ENCODE measurements at regions of chr3 and their contacts with region 1.

Region 1: GRCh38 chr3:196867507-196868296 is at the start of gene SENP5:
- DNase-seq: peak; percentile 48 to 87
- ATAC-seq: peak; percentile 93 to 95
- H3K4me3 ChIP-seq: peak within 1 kb of the TSS; percentile 79
- H3K27ac ChIP-seq: peak within 1 kb of the TSS; percentile 78 to 99
- H3K4me1 ChIP-seq: peaks cover 10% of the 10 kb centered on the region; the same call in 2 of the 3 replicates
- CTCF ChIP-seq: 0 out of 3 replicates have a peak, but pooled peaks have one; percentile 12
- EP300 ChIP-seq: no peak
- POLR2A ChIP-seq: peak; percentile 87
- RAD21 ChIP-seq: no peak
- polyA plus RNA-seq, gene SENP5: 12.9 and 14.4 TPM in 2 replicates

Region 2: DNA sequence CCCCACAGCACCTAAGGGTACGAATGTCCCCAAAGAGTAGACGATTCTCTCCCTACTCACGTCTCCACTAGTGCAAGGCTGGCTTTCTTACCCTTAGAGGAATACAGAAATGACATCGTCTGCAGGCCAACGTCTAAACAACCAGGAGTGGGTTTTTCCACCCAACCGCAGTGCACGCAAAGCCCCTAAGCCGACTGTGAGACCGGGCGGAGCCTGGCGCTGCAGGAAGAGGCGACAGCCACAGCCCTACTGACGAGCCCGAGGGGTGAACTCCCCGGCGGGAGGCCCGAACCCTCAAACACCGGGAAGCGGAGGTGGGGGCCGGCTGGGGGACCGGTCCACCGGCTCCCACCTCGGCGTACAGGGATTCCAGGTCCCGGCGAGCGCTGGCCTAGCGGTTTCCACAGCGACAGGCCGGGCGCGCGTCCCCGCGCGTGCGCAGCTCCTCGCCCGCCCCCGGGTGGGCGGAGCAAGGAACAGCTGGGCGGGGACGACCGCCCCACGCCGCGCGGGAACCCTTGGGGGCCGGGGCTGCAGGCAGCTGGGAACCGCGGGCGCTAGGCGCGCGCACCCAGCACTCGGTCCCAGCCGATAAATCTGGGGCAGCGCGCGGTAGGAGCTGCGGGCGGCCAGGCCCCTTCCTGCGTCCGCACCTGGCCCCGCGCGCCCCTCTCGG is 155.7 kb before region 1 on chr3 and contains the starts of genes CEP19 and PIGX:
- CTCF ChIA-PET with region 1: no interaction called
- POLR2A ChIA-PET with region 1: interaction called, 10 read pairs
- DNase-seq: peak; percentile 74 to 81
- ATAC-seq: peak; percentile 89 to 93
- H3K4me3 ChIP-seq: peak within 1 kb of the TSS; percentile 93
- H3K27ac ChIP-seq: peak within 1 kb of the TSS; percentile 95 to 99
- H3K4me1 ChIP-seq: peaks cover 19% of the 10 kb centered on the region
- CTCF ChIP-seq: no peak
- EP300 ChIP-seq: no peak
- POLR2A ChIP-seq: peak; percentile 76
- RAD21 ChIP-seq: no peak
- polyA plus RNA-seq, gene CEP19: 4.2 and 5.3 TPM in 2 replicates
- polyA plus RNA-seq, gene PIGX: 36.2 and 45.2 TPM in 2 replicates

Region 3: DNA sequence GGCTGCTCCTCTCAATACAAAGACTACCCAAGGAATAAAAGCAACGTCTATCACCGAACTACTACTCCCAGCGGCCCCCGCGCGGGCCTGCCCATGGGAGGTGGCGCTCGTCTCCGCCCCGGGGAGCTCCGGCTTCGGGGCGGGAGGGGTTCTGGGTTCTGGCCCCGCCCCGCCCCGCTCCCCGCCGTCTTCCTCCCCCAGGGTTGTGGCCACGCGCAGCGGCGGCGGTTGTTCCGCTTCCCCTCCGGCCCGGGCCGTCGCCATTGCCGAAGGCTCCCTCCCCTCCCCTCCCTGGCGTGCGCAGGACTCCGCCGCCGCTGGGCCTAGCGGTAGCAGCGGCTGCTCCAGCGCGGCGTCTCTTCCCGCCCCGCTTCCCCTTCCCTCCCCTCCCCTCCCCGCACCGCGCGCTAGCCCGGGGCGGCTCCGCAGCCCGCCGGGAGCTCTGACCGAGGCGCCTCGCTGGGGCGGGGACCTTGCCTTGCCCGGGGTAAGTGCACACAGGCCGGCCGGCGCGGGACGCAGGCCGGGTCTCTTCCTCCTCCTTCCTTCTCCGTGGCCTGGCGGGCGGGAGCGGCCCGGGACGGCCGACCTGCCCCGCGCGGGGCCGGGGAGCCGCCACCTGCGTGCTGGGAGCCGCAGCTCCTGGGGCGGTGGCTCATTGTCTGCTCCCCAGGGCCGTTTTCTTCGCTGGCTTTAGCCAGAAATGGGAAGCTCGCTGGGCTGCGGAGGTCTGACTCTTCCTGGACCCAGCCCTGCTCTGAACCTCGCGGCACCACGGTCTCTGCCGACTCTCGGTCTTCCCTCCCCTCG is 127.8 kb before region 1 on chr3 and contains the start of gene PAK2:
- CTCF ChIA-PET with region 1: no interaction called
- POLR2A ChIA-PET with region 1: interaction called, 13 read pairs
- DNase-seq: peak; percentile 56 to 85
- ATAC-seq: peak; percentile 89 to 97
- H3K4me3 ChIP-seq: peak within 1 kb of the TSS; percentile 70
- H3K27ac ChIP-seq: peak within 1 kb of the TSS; percentile 94 to 95
- H3K4me1 ChIP-seq: peaks cover 7% of the 10 kb centered on the region; the same call in 1 of the 3 replicates
- CTCF ChIP-seq: no peak
- EP300 ChIP-seq: no peak
- POLR2A ChIP-seq: peak; percentile 78
- RAD21 ChIP-seq: no peak
- polyA plus RNA-seq, gene PAK2: 49.8 and 61.8 TPM in 2 replicates

Region 4: DNA sequence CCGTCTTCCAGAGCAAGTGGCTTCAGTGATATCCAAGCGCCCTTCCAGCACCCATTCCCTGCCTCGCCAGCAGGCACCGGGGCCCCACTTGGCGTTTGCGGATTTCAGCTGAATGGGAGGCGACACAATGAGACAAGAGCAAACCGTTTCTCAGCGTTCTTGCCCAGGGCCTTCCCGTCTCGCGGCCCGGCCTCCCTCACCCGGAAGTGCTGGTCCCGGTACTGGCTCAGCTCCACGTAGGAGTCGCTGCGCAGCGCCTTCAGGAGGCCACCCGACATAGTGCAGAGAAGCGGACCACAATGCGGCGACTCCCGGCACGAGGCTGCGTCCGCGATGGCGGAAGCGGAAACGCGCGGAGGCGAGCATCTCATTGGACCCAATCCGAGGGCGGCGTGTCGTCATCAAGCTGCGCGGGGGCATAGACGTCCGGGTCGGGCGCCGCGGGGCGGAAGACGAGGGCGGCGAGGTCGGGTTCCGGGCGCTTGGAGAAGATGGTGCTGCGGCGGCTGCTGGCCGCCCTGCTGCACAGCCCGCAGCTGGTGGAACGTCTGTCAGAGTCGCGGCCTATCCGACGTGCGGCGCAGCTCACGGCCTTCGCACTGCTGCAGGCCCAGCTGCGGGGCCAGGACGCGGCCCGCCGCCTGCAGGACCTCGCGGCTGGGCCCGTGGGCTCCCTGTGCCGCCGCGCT is 74.7 kb after region 1 on chr3 and contains the start of gene NCBP2:
- CTCF ChIA-PET with region 1: interaction called, 3 read pairs
- POLR2A ChIA-PET with region 1: interaction called, 10 read pairs
- DNase-seq: peak; percentile 87 to 97
- ATAC-seq: peak; percentile 96 to 97
- H3K4me3 ChIP-seq: peak within 1 kb of the TSS; percentile 89
- H3K27ac ChIP-seq: peak within 1 kb of the TSS; percentile 97 to 98
- H3K4me1 ChIP-seq: peaks cover 9% of the 10 kb centered on the region; the same call in 2 of the 3 replicates
- CTCF ChIP-seq: peak; percentile 46; the same call in 2 of the 3 replicates
- EP300 ChIP-seq: no peak
- POLR2A ChIP-seq: peak; percentile 67
- RAD21 ChIP-seq: peak; percentile 36 to 50; a peak in 4 of 5 replicates
- polyA plus RNA-seq, gene NCBP2: 53.5 and 68.0 TPM in 2 replicates

Measured in A549 (cell line).